MCF 10A (cell line): ENCODE measurements at regions of chr3 and their contacts with region 1.

Region 1: GRCh38 chr3:10758304-10759061 is 57.5 kb upstream of the SLC6A11 start:
- DNase-seq: peak; percentile 65
- H3K4me3 Mint-ChIP-seq: no peak overlapping the region
- H3K27ac Mint-ChIP-seq: no peak overlapping the region
- H3K4me1 Mint-ChIP-seq: no peaks in the 10 kb centered on the region
- H3K27me3 Mint-ChIP-seq: peaks cover 13% of the 10 kb centered on the region
- CTCF ChIP-seq: peak; percentile 85

Region 2: GRCh38 chr3:10748040-10748439 is 10.4 kb before region 1 on chr3:
- CTCF ChIA-PET with region 1: interaction called, 29 read pairs
- POLR2A ChIA-PET with region 1: no interaction called
- intact Hi-C with region 1: no loop called
- DNase-seq: no peak
- H3K4me3 Mint-ChIP-seq: no peak overlapping the region
- H3K27ac Mint-ChIP-seq: no peak overlapping the region
- H3K4me1 Mint-ChIP-seq: no peaks in the 10 kb centered on the region
- H3K27me3 Mint-ChIP-seq: peaks cover 4% of the 10 kb centered on the region
- CTCF ChIP-seq: no peak

Region 3: GRCh38 chr3:10772271-10773161 is 14.0 kb after region 1 on chr3:
- CTCF ChIA-PET with region 1: interaction called, 54 read pairs
- POLR2A ChIA-PET with region 1: interaction called, 3 read pairs
- intact Hi-C with region 1: no loop called
- DNase-seq: peak; percentile 36
- H3K4me3 Mint-ChIP-seq: no peak overlapping the region
- H3K27ac Mint-ChIP-seq: no peak overlapping the region
- H3K4me1 Mint-ChIP-seq: peaks cover 6% of the 10 kb centered on the region
- H3K27me3 Mint-ChIP-seq: no peaks in the 10 kb centered on the region
- CTCF ChIP-seq: peak; percentile 36

Region 4: GRCh38 chr3:10783357-10784351 is 25.2 kb after region 1 on chr3:
- CTCF ChIA-PET with region 1: interaction called, 5 read pairs
- POLR2A ChIA-PET with region 1: no interaction called
- intact Hi-C with region 1: loop called (anchors 1 kb)
- DNase-seq: peak; percentile 51
- H3K4me3 Mint-ChIP-seq: no peak overlapping the region
- H3K27ac Mint-ChIP-seq: no peak overlapping the region
- H3K4me1 Mint-ChIP-seq: peaks cover 11% of the 10 kb centered on the region
- H3K27me3 Mint-ChIP-seq: peaks cover 37% of the 10 kb centered on the region
- CTCF ChIP-seq: peak; percentile 86

Region 5: DNA sequence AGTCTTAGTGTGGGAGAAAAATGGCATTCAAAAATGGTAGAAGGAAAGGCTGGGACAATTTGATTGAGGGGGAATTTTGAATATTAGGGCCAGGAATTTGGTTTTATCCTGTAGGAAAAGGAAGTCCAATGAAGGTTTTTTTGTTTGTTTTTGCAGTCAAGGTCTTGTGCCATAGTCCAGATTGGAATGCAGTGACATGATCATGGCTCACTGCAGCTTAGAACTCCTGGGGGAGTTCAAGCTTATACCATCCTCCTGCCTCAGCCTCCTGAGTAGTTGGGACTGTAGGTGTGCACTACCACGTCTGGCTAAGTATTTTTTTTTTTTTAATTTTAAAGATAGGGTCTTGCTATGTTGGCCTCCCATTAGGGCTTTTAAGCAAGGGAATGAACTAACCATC is 54.9 kb after region 1 on chr3:
- CTCF ChIA-PET with region 1: no interaction called
- POLR2A ChIA-PET with region 1: no interaction called
- intact Hi-C with region 1: no loop called
- DNase-seq: no peak
- H3K4me3 Mint-ChIP-seq: no peak overlapping the region
- H3K27ac Mint-ChIP-seq: no peak overlapping the region
- H3K4me1 Mint-ChIP-seq: no peaks in the 10 kb centered on the region
- H3K27me3 Mint-ChIP-seq: peaks cover 30% of the 10 kb centered on the region
- CTCF ChIP-seq: no peak

Region 6: DNA sequence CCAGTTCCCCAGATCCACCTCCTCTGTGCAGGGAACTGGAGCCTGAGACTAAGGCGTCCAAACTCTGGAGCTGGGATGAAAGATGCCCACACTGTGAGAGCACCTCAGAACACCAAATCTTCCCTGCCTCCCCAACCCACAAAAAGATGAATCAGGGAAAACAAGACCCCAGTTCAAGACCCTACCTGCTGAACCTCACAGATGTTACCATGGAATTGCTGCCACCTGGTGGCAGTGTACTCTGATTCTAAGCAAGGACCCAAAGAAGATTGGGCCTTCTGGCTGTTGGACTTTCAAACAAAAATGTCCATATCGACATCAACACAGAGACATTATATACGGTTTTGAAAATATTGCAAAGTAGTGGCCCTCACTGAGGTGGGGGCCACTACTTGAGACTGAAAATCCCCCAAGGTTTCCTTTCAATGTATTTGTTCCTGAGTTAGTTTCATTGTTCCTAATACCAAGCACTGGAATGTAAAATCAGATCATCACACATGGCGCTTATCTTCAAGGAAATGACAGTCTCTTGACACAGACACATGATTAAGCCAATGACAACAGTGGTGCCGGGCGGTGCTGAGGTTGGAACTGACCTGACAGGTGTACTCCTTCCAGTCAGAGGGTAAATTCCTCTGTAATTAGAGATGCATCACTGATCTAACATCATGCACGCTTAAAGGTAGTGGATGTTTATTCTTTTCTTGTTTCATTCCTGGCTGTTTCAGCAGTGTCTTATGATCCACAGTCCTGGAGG is 125.2 kb after region 1 on chr3:
- CTCF ChIA-PET with region 1: interaction called, 104 read pairs
- POLR2A ChIA-PET with region 1: interaction called, 3 read pairs
- intact Hi-C with region 1: loop called (anchors 1 kb)
- DNase-seq: peak; percentile 34
- H3K4me3 Mint-ChIP-seq: no peak overlapping the region
- H3K27ac Mint-ChIP-seq: no peak overlapping the region
- H3K4me1 Mint-ChIP-seq: peaks cover 8% of the 10 kb centered on the region
- H3K27me3 Mint-ChIP-seq: no peaks in the 10 kb centered on the region
- CTCF ChIP-seq: peak; percentile 36

Region 7: GRCh38 chr3:10945683-10946287 is 187.3 kb after region 1 on chr3:
- CTCF ChIA-PET with region 1: interaction called, 9 read pairs
- POLR2A ChIA-PET with region 1: no interaction called
- intact Hi-C with region 1: loop called (anchors 2 kb)
- DNase-seq: peak; percentile 70
- H3K4me3 Mint-ChIP-seq: no peak overlapping the region
- H3K27ac Mint-ChIP-seq: no peak overlapping the region
- H3K4me1 Mint-ChIP-seq: no peaks in the 10 kb centered on the region
- H3K27me3 Mint-ChIP-seq: peaks cover 22% of the 10 kb centered on the region
- CTCF ChIP-seq: peak; percentile 83

Region 8: DNA sequence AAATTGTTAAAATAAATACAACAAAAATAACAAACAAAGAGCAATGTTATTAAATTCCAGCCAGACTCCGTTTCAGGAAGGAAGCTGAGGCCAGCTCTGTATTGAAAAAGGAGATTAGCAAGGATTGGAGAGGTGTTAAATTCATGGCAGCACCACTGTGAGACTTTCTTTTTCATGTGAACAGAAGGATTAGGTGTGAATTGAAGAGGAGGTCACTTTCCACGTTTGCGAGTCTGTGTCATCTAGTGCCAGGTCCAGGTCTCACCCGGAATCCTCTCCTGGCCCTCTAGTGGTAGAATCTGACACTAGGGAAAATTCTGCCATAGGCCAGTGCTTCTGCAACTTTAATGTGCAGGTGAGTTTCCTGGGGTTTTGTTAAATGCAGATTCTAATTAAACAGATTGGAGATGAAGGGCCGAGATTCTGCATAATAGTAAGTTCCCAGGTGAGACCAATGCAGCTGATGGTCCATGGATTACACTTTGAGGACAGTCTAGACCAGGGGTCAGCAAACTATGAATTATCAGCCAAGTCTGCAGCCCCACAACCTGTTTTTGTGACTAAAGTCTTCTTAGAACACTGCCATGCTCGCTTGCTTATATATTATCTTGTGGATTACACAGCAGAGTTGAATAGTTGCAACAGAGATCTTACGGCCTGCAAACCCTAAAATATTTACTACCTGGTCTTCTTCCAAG is 224.9 kb after region 1 on chr3:
- CTCF ChIA-PET with region 1: interaction called, 43 read pairs
- POLR2A ChIA-PET with region 1: no interaction called
- intact Hi-C with region 1: loop called (anchors 1 kb)
- DNase-seq: peak; percentile 61
- H3K4me3 Mint-ChIP-seq: no peak overlapping the region
- H3K27ac Mint-ChIP-seq: no peak overlapping the region
- H3K4me1 Mint-ChIP-seq: peaks cover 11% of the 10 kb centered on the region
- H3K27me3 Mint-ChIP-seq: peaks cover 44% of the 10 kb centered on the region
- CTCF ChIP-seq: peak; percentile 63

Region 9: GRCh38 chr3:10996345-10997013 is 238.0 kb after region 1 on chr3:
- CTCF ChIA-PET with region 1: no interaction called
- POLR2A ChIA-PET with region 1: no interaction called
- intact Hi-C with region 1: no loop called
- DNase-seq: no peak
- H3K4me3 Mint-ChIP-seq: no peak overlapping the region
- H3K27ac Mint-ChIP-seq: no peak overlapping the region
- H3K4me1 Mint-ChIP-seq: peaks cover 9% of the 10 kb centered on the region
- H3K27me3 Mint-ChIP-seq: peaks cover 48% of the 10 kb centered on the region
- CTCF ChIP-seq: no peak